Activated CD4-positive, alpha-beta T cell treated with anti-CD3 and anti-CD28 coated beads for 36 hours (primary cell): ENCODE measurements at regions of chr17 and their contacts with region 1.

Region 1: DNA sequence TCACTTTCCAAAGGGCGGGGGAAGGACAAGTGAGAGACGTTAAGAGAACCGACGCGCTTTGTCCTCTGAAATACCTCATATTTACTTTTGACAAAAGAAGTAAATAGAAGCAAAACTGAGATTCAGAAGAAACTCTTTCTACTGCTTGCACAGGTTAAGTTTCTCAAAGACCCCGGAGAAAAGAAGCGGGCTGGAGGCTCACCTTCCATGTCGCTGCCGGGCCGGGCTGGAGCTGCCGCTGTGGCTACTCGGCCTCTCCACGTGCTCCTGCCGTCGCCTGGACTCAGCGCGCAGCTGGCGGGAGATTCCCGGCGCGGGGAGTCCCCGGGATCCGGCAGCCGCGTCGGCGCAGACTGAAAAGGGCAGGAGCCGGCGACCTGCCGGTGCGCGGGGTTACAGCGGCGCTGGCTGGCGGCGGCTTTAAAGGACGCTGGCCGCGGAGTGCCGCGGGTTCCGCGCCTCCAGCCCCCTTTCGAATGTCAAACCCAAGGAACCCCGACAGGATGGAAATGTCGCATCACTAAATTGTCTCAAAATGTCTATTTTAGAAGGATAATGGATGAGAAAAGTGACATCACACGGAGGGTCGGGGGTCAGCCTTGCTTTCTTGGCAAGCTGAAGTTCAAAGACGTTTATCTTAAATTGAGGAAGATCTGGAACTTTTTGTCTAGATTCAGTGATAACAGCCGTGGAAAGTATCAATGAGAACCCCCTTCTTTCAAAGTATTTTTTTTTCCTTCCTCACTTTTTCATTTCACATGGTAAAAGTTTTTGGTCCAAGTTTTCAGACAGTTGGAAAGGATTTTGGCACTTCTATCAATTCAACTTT is at the start of gene IKZF3:
- DNase-seq: peak; percentile 93
- ATAC-seq: peak; percentile 75
- H3K4me3 Mint-ChIP-seq: peak within 1 kb of the TSS; percentile 98
- H3K27ac Mint-ChIP-seq: peak within 1 kb of the TSS; percentile 97
- H3K4me1 Mint-ChIP-seq: peaks cover 67% of the 10 kb centered on the region
- H3K27me3 Mint-ChIP-seq: no peaks in the 10 kb centered on the region
- total RNA-seq, gene IKZF3: 37.6 to 50.4 TPM

Region 2: GRCh38 chr17:39687811-39688518 is 176.2 kb before region 1 on chr17 and contains the start of gene PGAP3:
- CTCF ChIA-PET with region 1: no interaction called
- POLR2A ChIA-PET with region 1: no interaction called
- intact Hi-C with region 1: loop called in 1 of 2 experiments (anchors 2 kb)
- DNase-seq: peak; percentile 92
- ATAC-seq: peak; percentile 96
- H3K4me3 Mint-ChIP-seq: peak within 1 kb of the TSS; percentile 86
- H3K27ac Mint-ChIP-seq: peak within 1 kb of the TSS; percentile 95
- H3K4me1 Mint-ChIP-seq: peaks cover 19% of the 10 kb centered on the region
- H3K27me3 Mint-ChIP-seq: no peaks in the 10 kb centered on the region
- total RNA-seq, gene PGAP3: 8.6 to 11.9 TPM

Region 3: DNA sequence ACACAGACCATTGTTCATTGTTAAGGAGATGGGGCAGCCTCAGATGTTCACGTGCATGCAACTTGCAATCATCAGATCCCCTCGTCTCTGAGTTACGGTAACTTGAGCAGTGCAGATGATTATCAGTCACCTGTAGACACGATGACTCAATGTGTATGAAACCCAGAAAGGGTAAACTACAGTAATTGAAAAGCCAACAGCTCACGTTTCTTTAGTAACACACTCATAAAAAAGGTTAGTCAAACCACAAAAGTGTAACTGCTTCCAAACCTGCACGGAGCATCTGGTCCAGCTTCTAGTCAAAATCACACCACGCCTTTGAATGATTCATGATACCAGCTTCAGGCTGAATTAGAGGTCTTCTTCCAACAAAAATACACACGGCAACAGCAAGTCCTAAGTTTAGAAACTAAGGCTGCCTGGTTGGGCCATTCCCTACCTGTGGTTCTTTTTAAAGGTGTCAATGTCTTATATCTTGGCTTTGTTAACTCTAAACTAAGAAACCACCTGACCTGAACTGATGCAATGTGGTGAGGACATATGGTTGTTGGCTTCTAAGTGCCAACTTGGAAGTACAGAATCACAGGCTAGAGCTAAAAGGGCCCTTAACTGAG is 94.1 kb before region 1 on chr17:
- CTCF ChIA-PET with region 1: interaction called, 3 read pairs
- POLR2A ChIA-PET with region 1: interaction called, 6 read pairs
- intact Hi-C with region 1: loop called (anchors 1 kb)
- DNase-seq: peak; percentile 78
- ATAC-seq: peak; percentile 80
- H3K4me3 Mint-ChIP-seq: peak overlapping the region; percentile 7
- H3K27ac Mint-ChIP-seq: peak overlapping the region; percentile 82
- H3K4me1 Mint-ChIP-seq: peaks cover 96% of the 10 kb centered on the region
- H3K27me3 Mint-ChIP-seq: no peaks in the 10 kb centered on the region

Region 4: DNA sequence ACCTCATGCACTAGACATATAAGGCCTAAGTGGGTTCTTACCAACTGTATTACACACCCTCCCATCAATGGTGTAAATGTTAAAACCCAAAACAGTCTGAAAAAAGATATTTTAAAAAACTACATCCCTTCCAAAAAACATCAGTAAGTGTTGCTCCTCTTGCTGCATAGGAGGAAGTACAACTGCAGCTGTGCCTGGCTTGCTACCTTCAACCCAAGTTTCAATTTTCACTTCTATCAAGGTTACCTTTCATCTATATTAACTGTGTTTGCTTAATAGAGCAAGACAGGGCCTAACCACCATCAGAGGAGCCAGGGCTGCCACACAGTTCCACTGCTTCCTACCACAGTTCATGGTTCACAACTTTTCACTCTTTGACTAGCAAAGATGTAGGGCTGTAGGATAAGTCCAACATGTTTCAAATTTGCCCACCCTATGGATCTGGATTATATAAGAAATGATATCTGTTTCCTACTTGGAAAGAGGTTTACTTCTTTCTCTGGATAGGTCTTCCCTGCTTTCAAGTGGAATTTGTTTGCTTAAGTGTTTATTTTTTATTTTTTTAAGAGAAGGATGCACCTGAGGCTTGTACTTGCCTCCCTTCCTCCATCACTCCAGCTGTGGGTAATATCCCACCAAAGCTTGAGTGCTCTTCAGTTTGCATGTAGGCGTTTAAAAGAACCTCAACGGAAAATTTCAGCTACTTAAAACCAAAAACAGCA is 69.7 kb before region 1 on chr17:
- CTCF ChIA-PET with region 1: interaction called, 4 read pairs
- POLR2A ChIA-PET with region 1: interaction called, 4 read pairs
- intact Hi-C with region 1: loop called (anchors 1 kb)
- DNase-seq: peak; percentile 33
- ATAC-seq: peak; percentile 14
- H3K4me3 Mint-ChIP-seq: no peak overlapping the region
- H3K27ac Mint-ChIP-seq: peak overlapping the region; percentile 82
- H3K4me1 Mint-ChIP-seq: peaks cover 76% of the 10 kb centered on the region
- H3K27me3 Mint-ChIP-seq: no peaks in the 10 kb centered on the region

Region 5: DNA sequence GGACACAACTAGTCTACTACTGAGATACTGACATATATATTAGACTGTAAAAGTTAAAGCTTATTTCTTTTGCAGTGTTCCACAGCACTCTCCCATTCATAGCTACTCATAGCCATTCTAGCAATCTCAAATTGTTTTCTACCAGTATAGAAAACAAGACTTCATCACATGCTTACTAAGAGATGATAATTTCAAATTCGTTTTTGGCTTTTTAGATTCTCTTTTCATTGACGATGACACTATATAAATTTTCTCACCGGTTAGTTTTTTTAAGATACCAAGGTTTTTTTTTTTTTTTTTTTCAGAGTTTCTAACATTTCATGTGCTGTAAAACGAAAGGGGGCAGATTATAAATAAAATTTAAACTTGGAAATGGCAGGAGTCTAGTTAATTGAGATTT is 17.9 kb before region 1 on chr17:
- CTCF ChIA-PET with region 1: interaction called, 5 read pairs
- POLR2A ChIA-PET with region 1: interaction called, 4 read pairs
- intact Hi-C with region 1: loop called in 1 of 2 experiments (anchors 2 kb)
- DNase-seq: no peak
- ATAC-seq: no peak
- H3K4me3 Mint-ChIP-seq: no peak overlapping the region
- H3K27ac Mint-ChIP-seq: no peak overlapping the region
- H3K4me1 Mint-ChIP-seq: peaks cover 66% of the 10 kb centered on the region
- H3K27me3 Mint-ChIP-seq: no peaks in the 10 kb centered on the region